Stomach (tissue), 19 donors: ENCODE measurements at regions of chr9 and their contacts with region 1.

Region 1: DNA sequence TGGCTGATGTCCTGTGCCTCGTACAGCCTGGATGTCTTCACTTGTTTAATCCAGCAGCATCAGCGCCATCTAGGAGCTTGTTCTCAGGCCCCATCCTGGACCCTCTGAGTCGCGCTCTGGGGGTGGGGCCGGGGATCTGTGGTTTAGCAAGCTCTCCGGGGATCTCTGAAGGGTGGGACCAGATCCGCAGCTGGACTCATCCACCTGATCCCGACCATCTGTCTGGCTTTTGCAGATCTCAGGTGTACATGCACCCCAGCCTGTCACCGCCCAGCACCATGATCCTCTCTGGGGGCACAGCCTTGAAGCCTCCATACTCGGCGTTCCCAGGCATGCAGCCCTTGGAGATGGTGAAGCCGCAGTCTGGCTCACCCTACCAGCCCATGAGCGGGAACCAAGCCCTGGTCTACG is 15.1 kb upstream of the POMT1 start:
- DNase-seq: no peak
- H3K4me3 ChIP-seq: no peak overlapping the region
- H3K27ac ChIP-seq: no peak overlapping the region
- H3K4me1 ChIP-seq: peaks cover 0 to 10% (median 2%) of the 10 kb centered on the region in 4 donors
- H3K27me3 ChIP-seq: no peaks in the 10 kb centered on the region
- CTCF ChIP-seq: no peak
- EP300 ChIP-seq: no peak
- POLR2A ChIP-seq: no peak

Region 2: DNA sequence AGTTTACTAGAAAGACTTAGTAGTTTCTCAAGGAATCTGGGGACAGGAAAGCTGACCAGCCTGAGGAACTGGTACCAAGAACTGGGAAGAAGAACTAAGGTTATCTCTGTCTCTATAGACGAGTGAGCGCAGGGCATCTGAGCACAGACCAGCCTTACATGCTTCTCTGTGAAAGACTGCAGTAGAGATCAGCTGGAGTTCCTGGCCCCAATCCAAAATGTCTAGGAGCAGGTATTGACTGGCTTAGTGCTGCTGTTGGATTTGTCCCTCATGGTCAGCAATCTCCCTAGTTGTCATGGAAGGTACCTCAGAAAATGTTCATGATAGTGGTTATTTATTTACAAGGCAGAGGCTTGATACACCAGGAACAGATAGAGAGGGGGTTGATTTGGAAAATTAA is 348.9 kb before region 1 on chr9:
- intact Hi-C with region 1: no loop called
- DNase-seq: peak in 1 of 2 donors; percentile 47
- H3K4me3 ChIP-seq: no peak overlapping the region
- H3K27ac ChIP-seq: no peak overlapping the region
- H3K4me1 ChIP-seq: no peaks in the 10 kb centered on the region
- H3K27me3 ChIP-seq: no peaks in the 10 kb centered on the region
- CTCF ChIP-seq: no peak
- EP300 ChIP-seq: no peak
- POLR2A ChIP-seq: no peak

Region 3: GRCh38 chr9:131349881-131350563 is 137.6 kb before region 1 on chr9:
- intact Hi-C with region 1: loop called (anchors 5 kb)
- DNase-seq: peak; percentile 93 to 94
- H3K4me3 ChIP-seq: peak overlapping the region; percentile 5 to 37 (median 28)
- H3K27ac ChIP-seq: peak overlapping the region in 1 of 5 donors; percentile 54
- H3K4me1 ChIP-seq: peaks cover 9 to 21% (median 12%) of the 10 kb centered on the region in 4 donors
- H3K27me3 ChIP-seq: peaks cover 0 to 13% (median 0%) of the 10 kb centered on the region in 3 donors
- CTCF ChIP-seq: peak in 5 of 7 experiments; percentile 77 to 92 (median 78)
- EP300 ChIP-seq: no peak
- POLR2A ChIP-seq: no peak

Region 4: GRCh38 chr9:131554088-131554864 is 66.7 kb after region 1 on chr9:
- intact Hi-C with region 1: no loop called
- DNase-seq: no peak
- H3K4me3 ChIP-seq: no peak overlapping the region
- H3K27ac ChIP-seq: no peak overlapping the region
- H3K4me1 ChIP-seq: no peaks in the 10 kb centered on the region
- H3K27me3 ChIP-seq: peaks cover 0 to 65% (median 30%) of the 10 kb centered on the region in 3 donors
- CTCF ChIP-seq: no peak
- EP300 ChIP-seq: no peak
- POLR2A ChIP-seq: no peak